ENCODE measurements at regions of chr1 and their contacts with region 1.

Region 1: DNA sequence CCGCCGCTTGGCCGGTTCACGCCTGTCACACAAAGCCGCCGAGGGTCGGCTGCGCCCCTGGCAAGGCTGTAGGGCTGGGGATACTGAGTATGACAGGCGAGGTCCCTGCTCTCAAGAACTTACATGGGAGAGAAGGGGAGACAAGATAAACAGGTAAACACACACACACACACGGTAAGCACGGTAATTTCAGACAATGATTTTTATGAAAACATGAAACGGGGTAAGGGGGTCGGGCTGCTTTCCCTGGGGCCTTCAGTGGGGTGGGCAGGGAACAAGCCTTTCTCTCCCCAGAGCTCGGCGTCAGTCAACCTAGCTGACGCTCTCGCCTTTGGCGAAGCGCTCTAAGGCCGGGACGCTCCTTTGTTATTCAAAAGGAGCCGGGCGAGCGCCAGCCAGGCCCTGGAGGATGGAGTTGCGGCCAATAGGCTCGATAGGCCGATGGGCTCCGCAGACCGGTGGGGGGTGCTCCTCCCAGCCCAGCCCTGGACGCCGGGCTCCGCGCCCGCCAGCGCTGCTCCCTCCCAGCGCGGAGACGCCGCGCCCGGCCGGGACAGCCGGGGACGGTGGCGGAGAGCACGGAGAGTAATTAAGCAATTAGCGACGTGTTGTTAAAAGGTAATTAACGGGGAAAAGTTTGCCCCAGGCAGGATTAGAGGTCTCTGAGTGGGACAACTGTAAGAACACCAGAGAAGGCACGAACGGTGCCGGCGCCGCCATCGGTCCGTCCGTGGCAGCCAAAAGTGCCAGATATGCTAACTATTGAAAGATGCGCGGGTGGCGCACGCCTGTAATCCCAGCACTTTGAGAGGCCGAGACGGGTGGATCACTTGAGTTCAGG is 950 bp upstream of the INKA2 start:
- DNase-seq: peak; percentile 76 to 77
- H3K4me3 ChIP-seq: peak overlapping the region; percentile 38 to 41
- H3K27ac ChIP-seq: peak overlapping the region; percentile 84 to 88
- H3K4me1 ChIP-seq: no peaks in the 10 kb centered on the region
- H3K27me3 ChIP-seq: no peaks in the 10 kb centered on the region
- CTCF ChIP-seq: no peak
- POLR2A ChIP-seq: no peak

Region 2: GRCh38 chr1:111507411-111508201 is 232.5 kb before region 1 on chr1:
- intact Hi-C with region 1: loop called (anchors 5 kb)
- DNase-seq: peak; percentile 71 to 72
- H3K4me3 ChIP-seq: peak overlapping the region; percentile 4 to 30
- H3K27ac ChIP-seq: peak overlapping the region; percentile 93 to 96
- H3K4me1 ChIP-seq: peaks cover 0 to 19% of the 10 kb centered on the region in 2 donors
- H3K27me3 ChIP-seq: no peaks in the 10 kb centered on the region
- CTCF ChIP-seq: peak in 2 of 4 experiments; percentile 5 to 36
- POLR2A ChIP-seq: no peak

Region 3: DNA sequence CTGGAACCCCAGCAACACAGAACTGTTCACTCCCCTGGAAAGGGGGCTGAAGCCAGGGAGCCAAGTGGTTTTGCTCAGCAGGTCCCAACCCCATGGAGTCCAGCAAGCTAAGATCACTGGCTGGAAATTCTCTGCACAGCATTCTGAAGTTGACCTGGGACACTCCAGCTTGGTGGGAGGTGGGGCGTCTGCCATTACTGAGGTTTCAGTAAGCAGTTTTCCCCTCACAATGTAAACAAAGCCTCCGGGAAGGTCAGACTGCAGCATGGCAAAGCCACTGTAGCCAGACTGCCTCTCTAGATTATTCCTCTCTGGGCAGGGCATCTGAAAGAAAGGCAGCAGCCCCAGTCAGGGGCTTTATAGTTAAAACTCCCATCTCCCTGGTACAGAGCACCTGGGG is 60.6 kb before region 1 on chr1:
- intact Hi-C with region 1: no loop called
- DNase-seq: no peak
- H3K4me3 ChIP-seq: no peak overlapping the region
- H3K27ac ChIP-seq: no peak overlapping the region
- H3K4me1 ChIP-seq: no peaks in the 10 kb centered on the region
- H3K27me3 ChIP-seq: no peaks in the 10 kb centered on the region
- CTCF ChIP-seq: no peak
- POLR2A ChIP-seq: no peak

Measured in uterus (tissue), 4 donors.